ENCODE measurements at regions of chr17 and their contacts with region 1.

Region 1: GRCh38 chr17:68205251-68205807 is 42.5 kb upstream of the AMZ2 start:
- DNase-seq: peak; percentile 90
- ATAC-seq: peak; percentile 75
- H3K4me3 Mint-ChIP-seq: peak overlapping the region; percentile 85
- H3K27ac Mint-ChIP-seq: no peak overlapping the region
- H3K4me1 Mint-ChIP-seq: peaks cover 18% of the 10 kb centered on the region
- H3K27me3 Mint-ChIP-seq: peaks cover 48% of the 10 kb centered on the region
- CTCF ChIP-seq: peak; percentile 91

Region 2: GRCh38 chr17:68057531-68057952 is 147.8 kb before region 1 on chr17:
- CTCF ChIA-PET with region 1: interaction called, 10 read pairs
- POLR2A ChIA-PET with region 1: no interaction called
- DNase-seq: peak; percentile 35
- ATAC-seq: peak; percentile 82
- H3K4me3 Mint-ChIP-seq: no peak overlapping the region
- H3K27ac Mint-ChIP-seq: no peak overlapping the region
- H3K4me1 Mint-ChIP-seq: peaks cover 7% of the 10 kb centered on the region
- H3K27me3 Mint-ChIP-seq: no peaks in the 10 kb centered on the region
- CTCF ChIP-seq: no peak

Region 3: DNA sequence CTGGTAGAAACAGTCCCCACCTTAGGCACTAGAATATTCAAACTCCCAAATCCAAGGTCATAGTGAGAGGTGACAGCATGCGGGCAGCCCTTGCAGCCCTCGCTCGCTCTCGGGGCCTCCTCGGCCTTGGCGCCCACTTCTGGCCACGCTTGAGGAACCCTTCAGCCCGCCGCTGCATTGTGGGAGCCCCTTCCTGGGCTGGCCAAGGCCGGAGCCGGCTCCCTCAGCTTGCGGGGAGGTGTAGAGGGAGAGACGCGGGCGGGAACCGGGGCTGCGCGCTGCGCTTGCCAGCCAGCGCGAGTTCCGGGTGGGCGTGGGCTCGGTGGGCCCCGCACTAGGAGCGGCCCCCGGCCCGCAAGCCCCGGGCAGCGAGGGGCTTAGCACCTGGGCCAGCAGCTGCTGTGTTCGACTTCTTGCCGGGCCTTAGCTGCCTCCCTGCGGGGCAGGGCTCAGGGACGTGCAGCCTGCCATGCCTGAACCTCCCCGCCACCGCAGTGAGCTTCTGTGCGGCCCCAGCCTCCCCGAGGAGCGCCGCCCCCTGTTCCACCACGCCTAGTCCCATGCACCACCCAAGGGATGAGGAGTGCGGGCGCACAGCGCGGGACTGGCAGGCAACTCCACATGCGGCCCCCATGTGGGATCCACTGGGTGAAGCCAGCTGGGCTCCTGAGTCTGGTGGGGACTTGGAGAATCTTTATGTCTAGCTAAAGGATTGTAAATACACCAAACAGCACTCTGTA is 124.7 kb before region 1 on chr17:
- CTCF ChIA-PET with region 1: no interaction called
- POLR2A ChIA-PET with region 1: no interaction called
- DNase-seq: no peak
- ATAC-seq: no peak
- H3K4me3 Mint-ChIP-seq: no peak overlapping the region
- H3K27ac Mint-ChIP-seq: no peak overlapping the region
- H3K4me1 Mint-ChIP-seq: peaks cover 3% of the 10 kb centered on the region
- H3K27me3 Mint-ChIP-seq: no peaks in the 10 kb centered on the region; the same call in 1 of the 2 replicates
- CTCF ChIP-seq: no peak

Region 4: GRCh38 chr17:68172461-68172954 is 32.8 kb before region 1 on chr17:
- CTCF ChIA-PET with region 1: interaction called, 59 read pairs
- POLR2A ChIA-PET with region 1: interaction called, 3 read pairs
- DNase-seq: peak; percentile 84
- ATAC-seq: peak; percentile 89
- H3K4me3 Mint-ChIP-seq: no peak overlapping the region
- H3K27ac Mint-ChIP-seq: no peak overlapping the region
- H3K4me1 Mint-ChIP-seq: no peaks in the 10 kb centered on the region
- H3K27me3 Mint-ChIP-seq: peaks cover 4% of the 10 kb centered on the region; the same call in 1 of the 2 replicates
- CTCF ChIP-seq: peak; percentile 98

Region 5: DNA sequence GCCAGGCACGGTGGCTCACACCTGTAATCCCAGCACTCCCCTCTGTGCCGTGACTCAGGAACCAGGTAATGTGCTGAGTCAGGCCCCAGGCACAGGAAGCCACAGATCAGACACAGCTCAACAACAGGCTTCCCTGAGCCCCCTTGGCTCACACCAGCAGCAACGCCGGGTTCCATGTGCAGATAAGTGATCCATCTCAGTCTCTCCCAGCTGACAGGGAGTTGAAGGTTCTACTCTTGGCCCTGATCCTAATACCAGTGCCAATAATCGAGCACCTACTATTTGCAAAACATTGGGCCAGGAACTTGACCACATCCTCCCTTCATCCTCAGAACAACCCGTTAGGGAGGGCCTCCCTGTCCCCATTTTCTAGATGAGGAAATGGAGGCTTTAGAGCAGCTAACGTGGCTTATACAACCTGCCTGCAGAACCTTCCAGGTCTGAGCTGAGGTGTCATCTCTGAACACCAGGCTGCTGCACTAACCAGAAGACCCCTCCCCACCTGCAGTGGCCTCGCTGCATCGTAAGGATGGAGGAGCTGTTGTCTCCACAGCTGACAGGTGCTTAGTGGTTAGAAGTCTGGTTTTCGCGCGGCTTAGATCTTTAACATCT is 22.3 kb before region 1 on chr17:
- CTCF ChIA-PET with region 1: interaction called, 33 read pairs
- POLR2A ChIA-PET with region 1: no interaction called
- DNase-seq: no peak
- ATAC-seq: peak; percentile 84
- H3K4me3 Mint-ChIP-seq: no peak overlapping the region
- H3K27ac Mint-ChIP-seq: no peak overlapping the region
- H3K4me1 Mint-ChIP-seq: peaks cover 13% of the 10 kb centered on the region
- H3K27me3 Mint-ChIP-seq: no peaks in the 10 kb centered on the region; the same call in 1 of the 2 replicates
- CTCF ChIP-seq: no peak

Region 6: DNA sequence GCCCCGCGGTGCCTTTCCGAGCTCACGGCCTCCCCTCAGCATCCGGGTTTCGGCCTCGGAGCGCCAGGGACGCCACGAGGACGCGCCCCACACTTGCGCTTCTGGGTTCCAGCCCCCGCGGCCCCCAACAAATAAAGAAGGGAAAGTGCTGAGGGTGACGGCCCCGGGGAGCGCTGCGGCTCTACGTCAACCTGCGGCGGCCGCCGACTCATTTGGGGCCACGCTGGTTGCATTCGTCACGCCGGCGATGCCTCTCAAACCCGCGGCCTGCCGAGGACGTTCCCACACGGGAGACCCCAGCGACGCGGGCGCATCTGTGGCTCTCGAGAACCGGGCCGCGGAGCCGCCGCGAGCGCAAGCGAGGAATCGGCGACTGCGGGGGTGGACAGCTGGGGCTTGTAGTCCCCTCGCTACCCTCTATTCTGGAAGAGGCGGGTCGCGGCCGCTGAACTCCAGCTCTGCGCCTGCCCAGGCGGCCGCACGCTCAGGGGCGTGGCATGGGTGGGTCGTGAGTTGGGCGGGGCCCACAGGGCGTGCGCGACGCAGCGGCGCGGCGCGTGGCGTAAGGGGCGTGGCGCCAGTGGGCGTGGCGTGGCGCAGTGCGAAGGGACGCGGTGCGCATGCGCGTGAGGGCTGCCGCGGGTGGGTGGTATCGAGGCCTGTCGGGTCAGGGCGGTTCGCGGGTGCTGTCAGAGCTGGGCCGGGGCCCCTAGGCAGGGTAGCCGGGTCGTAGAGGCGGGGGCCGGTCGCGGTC is 42.3 kb after region 1 on chr17 and contains the start of gene AMZ2:
- CTCF ChIA-PET with region 1: interaction called, 13 read pairs
- POLR2A ChIA-PET with region 1: no interaction called
- DNase-seq: peak; percentile 91
- ATAC-seq: peak; percentile 97
- H3K4me3 Mint-ChIP-seq: peak within 1 kb of the TSS; percentile 80
- H3K27ac Mint-ChIP-seq: peak within 1 kb of the TSS; percentile 72; the same call in 1 of the 2 replicates
- H3K4me1 Mint-ChIP-seq: peaks cover 14% of the 10 kb centered on the region
- H3K27me3 Mint-ChIP-seq: no peaks in the 10 kb centered on the region
- CTCF ChIP-seq: no peak
- total RNA-seq, gene AMZ2: 54.6 to 79.0 TPM (median 73.6 TPM) in 3 replicates